ENCODE measurements at regions of chr22 and their contacts with region 1.

Region 1: GRCh38 chr22:19705181-19705934 is 8.9 kb upstream of the SEPTIN5 start:
- DNase-seq: peak; percentile 91
- ATAC-seq: peak; percentile 90
- H3K4me3 Mint-ChIP-seq: no peak overlapping the region
- H3K27ac Mint-ChIP-seq: peak overlapping the region; percentile 72; the same call in 1 of the 2 replicates
- H3K4me1 Mint-ChIP-seq: peaks cover 40% of the 10 kb centered on the region
- H3K27me3 Mint-ChIP-seq: peaks cover 3% of the 10 kb centered on the region
- CTCF ChIP-seq: 0 out of 2 replicates have a peak, but pooled peaks have one; percentile 23

Region 2: GRCh38 chr22:19691721-19692341 is 13.5 kb before region 1 on chr22:
- CTCF ChIA-PET with region 1: interaction called, 38 read pairs
- POLR2A ChIA-PET with region 1: interaction called, 4 read pairs
- DNase-seq: no peak
- ATAC-seq: peak; percentile 10
- H3K4me3 Mint-ChIP-seq: no peak overlapping the region
- H3K27ac Mint-ChIP-seq: no peak overlapping the region
- H3K4me1 Mint-ChIP-seq: peaks cover 27% of the 10 kb centered on the region
- H3K27me3 Mint-ChIP-seq: peaks cover 4% of the 10 kb centered on the region; the same call in 1 of the 2 replicates
- CTCF ChIP-seq: no peak

Region 3: GRCh38 chr22:19717691-19718455 is 12.5 kb after region 1 on chr22:
- CTCF ChIA-PET with region 1: interaction called, 35 read pairs
- POLR2A ChIA-PET with region 1: no interaction called
- DNase-seq: peak; percentile 70
- ATAC-seq: peak; percentile 29
- H3K4me3 Mint-ChIP-seq: peak overlapping the region; percentile 62
- H3K27ac Mint-ChIP-seq: no peak overlapping the region
- H3K4me1 Mint-ChIP-seq: peaks cover 21% of the 10 kb centered on the region
- H3K27me3 Mint-ChIP-seq: peaks cover 80% of the 10 kb centered on the region
- CTCF ChIP-seq: peak; percentile 95

Region 4: GRCh38 chr22:19723983-19724827 is 18.8 kb after region 1 on chr22:
- CTCF ChIA-PET with region 1: interaction called, 17 read pairs
- POLR2A ChIA-PET with region 1: no interaction called
- DNase-seq: peak; percentile 76
- ATAC-seq: peak; percentile 68
- H3K4me3 Mint-ChIP-seq: peak overlapping the region; percentile 53
- H3K27ac Mint-ChIP-seq: no peak overlapping the region
- H3K4me1 Mint-ChIP-seq: peaks cover 20% of the 10 kb centered on the region
- H3K27me3 Mint-ChIP-seq: peaks cover 95% of the 10 kb centered on the region
- CTCF ChIP-seq: peak; percentile 27; the same call in 1 of the 2 replicates